Dorsolateral prefrontal cortex (tissue), 120 donors: ENCODE measurements at regions of chr12 and their contacts with region 1.

Region 1: DNA sequence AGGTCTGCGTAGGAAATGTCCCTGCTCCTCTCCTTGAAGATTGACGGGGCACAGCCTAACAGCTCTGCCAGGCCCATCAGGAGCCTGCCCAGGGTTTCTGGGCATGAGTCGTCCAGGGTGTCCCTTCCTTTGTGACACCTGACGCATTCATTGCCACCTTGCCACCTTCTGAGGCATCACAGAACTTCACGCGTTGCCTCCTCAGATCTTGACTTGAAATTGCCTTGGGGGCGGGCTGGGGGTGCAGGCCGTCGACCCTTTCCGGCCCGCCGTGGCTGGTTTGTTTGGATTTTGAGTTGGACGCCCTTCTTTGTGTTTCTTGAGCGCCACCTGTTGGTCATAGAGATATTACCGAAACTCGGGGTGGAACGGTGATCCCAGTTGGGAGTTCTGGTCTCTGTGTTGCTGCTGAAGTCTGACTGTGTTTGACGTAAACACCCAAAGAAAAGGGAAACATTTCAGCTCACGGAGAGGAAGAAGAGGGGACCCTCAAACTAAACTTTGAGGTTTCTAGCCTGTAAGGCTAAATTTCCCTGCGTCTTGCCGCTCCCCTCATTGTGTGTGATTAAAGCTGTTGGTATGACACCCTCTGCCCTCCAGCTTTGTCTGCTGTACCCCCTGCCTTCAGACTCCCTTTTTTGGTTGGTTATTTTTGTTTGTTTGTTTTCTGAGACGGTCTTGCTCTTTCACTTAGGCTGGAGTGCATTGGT is 44.6 kb downstream of the MLXIP start:
- DNase-seq: peak in 7 of 10 donors; percentile 49 to 77 (median 74)
- H3K4me3 ChIP-seq: peak overlapping the region in 14 of 59 donors; percentile 1 to 39 (median 24)
- H3K27ac ChIP-seq: peak overlapping the region in 4 of 59 donors; percentile 6 to 59 (median 22)
- H3K27me3 ChIP-seq: no peaks in the 10 kb centered on the region
- CTCF ChIP-seq: peak; percentile 63 to 95 (median 82)

Region 2: DNA sequence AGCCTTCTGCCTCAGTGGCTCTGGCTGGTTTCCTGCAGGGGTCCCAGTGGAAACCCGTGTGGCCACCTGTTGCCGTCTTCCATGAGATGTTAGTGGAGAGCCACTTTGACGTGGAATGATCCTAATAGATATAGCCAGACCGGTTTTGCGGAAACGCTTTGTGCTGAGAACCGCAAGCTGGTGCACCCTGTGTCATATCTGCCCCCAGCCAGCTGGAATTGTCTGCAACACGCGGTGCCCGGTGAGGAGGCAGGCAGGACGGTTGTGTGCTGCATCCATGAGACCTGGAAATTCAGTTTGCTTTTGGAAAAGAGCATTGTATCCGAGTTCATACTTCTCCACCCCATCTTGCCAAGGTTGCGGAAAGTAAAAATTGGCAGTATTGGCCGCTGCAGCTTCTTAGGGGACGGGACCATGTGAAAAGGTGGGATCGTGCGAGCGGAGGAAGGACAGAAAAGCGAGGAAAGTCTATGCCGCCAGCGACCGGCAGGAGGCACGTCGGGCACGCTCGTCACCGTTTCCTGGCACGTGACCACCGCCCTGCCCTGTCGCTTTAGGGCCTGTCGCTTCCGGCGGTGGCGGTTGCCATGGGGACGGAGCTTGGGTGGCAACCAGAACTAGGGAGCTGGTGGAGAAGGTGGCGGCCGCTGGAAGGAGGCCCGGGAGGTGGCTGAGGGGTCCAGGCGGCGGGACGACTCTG is 205.1 kb before region 1 on chr12 and contains the start of gene CFAP251:
- intact Hi-C with region 1: loop called in 1 of 2 experiments (anchors 10 kb)
- DNase-seq: peak; percentile 86 to 98 (median 93)
- H3K4me3 ChIP-seq: peak within 1 kb of the TSS; percentile 42 to 79 (median 62)
- H3K27ac ChIP-seq: peak within 1 kb of the TSS in 53 of 59 donors; percentile 4 to 83 (median 53)
- H3K27me3 ChIP-seq: no peaks in the 10 kb centered on the region
- CTCF ChIP-seq: peak in 55 of 56 donors; percentile 17 to 95 (median 67)
- total RNA-seq, gene CFAP251: 3.0 to 12.4 (median 6.6) TPM

Region 3: DNA sequence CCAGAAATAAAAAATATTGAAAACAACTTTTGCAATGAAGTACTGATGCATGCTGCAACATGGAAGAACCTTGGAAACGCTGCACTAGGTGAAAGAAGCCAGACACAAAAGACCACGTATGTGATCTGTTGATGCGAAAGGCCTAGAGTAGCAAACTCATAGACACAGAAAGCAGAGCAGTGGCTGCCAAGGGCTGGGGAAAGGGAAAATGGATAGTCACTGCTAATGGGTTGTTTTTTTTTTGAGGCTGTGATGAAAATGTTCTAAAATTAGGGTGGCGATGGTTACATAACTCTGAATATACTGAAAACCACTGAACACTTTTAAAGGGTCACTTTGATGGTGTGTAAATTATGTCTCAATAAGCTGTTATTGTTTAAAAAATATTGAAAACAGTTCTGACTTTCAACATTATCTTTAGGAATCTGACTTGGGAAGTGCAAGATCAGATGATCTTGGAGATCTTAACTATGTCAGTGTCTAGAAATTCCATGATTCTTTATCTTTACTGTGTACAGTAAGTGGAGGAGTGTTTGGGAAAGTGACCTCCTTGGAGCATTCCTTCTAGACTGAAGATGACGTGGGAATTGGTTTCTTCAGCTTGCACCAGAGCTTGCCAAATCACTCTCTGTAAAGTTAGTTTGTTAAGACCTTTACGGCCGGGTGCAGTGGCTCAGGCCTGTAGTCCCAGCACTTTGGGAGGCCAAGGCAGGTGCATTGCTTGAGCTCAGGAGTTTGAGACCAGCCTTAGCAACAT is 32.3 kb before region 1 on chr12:
- intact Hi-C with region 1: no loop called
- DNase-seq: no peak
- H3K4me3 ChIP-seq: no peak overlapping the region
- H3K27ac ChIP-seq: peak overlapping the region in 27 of 59 donors; percentile 0 to 65 (median 24)
- H3K27me3 ChIP-seq: no peaks in the 10 kb centered on the region
- CTCF ChIP-seq: no peak